GM13977 (cell line): ENCODE measurements at regions of chr5 and their contacts with region 1.

Region 1: GRCh38 chr5:154811653-154812365 is 38.6 kb downstream of the FAXDC2 start:
- DNase-seq: peak; percentile 64
- CTCF ChIP-seq: peak; percentile 81

Region 2: GRCh38 chr5:154654486-154655371 is 157.1 kb before region 1 on chr5:
- in situ Hi-C with region 1: loop called (anchors 10 kb)
- DNase-seq: no peak
- CTCF ChIP-seq: no peak

Region 3: DNA sequence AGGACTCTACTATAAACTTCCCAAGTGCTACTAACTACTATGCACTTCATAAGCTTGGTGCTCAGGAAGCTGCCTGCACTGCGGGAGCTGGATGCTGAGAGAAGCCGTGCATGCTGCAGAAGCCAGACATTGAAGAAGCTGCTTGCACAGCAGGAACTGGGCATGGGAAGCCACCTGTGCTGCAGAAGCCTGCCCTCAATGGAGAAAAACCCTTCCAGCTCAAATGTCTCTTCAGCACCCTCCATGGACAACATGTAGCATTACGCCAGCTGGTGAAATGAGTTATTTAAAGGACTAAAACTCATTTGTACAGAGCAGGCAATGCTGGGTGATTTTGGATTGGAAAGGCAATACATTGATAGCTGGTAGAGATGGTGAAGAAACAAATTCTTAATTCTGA is 449.0 kb after region 1 on chr5:
- in situ Hi-C with region 1: no loop called
- DNase-seq: peak; percentile 23
- CTCF ChIP-seq: peak; percentile 14